ENCODE measurements at regions of chr10 and their contacts with region 1.

Region 1: DNA sequence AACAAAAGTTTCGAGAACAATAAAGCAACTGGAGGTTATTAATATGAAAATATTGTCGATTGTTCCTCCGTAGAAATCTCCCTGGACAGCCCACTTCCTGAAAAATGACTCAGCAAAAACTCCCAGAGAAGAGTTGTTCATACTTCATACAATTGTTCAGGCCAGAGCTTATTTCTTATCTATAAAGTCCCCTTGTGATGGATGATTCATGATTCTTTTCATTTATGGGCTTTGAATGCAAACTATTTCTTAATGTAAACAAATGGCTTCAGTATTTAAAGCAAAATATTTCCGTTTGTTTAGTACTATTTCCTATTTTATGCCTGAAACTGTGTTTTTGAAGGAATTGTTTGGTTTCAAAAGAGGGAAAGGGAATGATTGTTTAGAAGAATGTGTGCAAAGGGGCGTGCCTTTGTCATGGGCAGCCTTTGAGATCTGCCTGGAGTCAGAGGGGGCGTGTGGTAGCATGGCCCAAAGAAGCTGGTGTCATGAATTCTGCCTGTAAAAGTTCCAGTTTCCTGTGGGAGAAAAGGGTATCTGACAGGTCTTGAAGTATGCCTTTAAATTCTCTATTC is 26.2 kb upstream of the EXOC6 start:
- DNase-seq: no peak

Region 2: GRCh38 chr10:92689663-92690210 is 132.4 kb before region 1 on chr10 and contains the start of gene HHEX:
- intact Hi-C with region 1: loop called (anchors 5 kb)
- DNase-seq: peak; percentile 85
- total RNA-seq, gene HHEX: 4.4 TPM

Region 3: GRCh38 chr10:92757066-92757710 is 65.0 kb before region 1 on chr10:
- intact Hi-C with region 1: loop called (anchors 5 kb)
- DNase-seq: peak; percentile 93

Measured in cardiac septum (tissue), 1 donor.